Activated T-helper 2 cell treated with anti-CD3 and anti-CD28 coated beads, Interferon-gamma antibody, Interleukin-2, Interleukin-4, amounts not matched to agents 10 μg/mL and 5 μg/mL and 100 μg/mL, durations not matched to agents 14 hours and 24 hours and 36 hours (primary cell): ENCODE measurements at regions of chr12 and their contacts with region 1.

Region 1: DNA sequence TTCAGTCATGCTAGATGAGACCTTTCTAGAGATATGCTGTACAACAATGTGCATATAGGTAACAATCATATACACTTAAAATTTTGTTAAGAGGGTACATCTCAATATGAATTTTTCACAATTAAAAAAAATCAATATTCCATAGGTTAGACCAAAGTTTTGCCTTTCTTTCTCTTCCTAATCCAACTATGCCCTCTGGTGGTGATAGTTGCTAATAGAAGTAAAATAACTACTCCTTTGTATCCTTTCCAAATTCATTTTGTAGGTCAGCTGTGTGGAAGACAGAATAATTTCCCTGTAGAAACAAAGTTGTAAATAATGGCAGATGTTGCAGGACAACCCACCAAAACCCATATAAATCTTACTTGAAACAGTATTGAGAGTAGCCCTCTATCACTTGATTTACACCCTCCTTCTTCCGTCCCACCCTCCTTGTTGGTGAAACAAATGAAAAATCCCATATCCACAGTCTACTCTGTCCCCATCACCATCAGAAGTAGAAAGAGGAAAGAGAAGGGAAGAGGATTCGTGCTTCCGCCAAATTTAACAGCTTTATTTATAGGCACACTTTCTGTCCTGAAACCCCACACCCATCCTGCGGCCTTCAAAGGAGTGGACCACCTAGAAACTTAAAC is 34.2 kb upstream of the KICS2 start:
- DNase-seq: no peak
- H3K4me3 Mint-ChIP-seq: no peak overlapping the region
- H3K27ac Mint-ChIP-seq: no peak overlapping the region
- H3K4me1 Mint-ChIP-seq: peaks cover 8% of the 10 kb centered on the region
- H3K27me3 Mint-ChIP-seq: no peaks in the 10 kb centered on the region

Region 2: DNA sequence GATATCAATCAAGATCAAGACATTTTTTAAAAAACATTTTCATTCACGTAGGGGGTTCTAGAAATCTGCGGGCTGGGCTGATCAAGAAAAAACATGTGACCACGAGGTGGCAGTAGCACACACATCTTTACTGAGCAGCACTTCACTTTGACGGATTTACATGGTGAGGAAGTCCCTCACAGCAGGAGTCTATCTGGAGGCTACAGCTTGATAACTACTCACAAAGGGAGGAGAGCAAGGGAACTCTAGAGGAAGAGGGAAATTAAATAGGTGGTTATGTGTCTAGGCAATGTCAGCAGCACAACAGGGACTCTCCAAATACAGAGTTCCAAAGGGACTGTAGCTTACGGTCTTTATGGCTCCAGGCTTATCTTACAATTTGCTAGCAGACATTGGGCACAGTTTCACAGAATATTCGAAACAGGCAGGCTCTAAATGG is 836.1 kb before region 1 on chr12:
- intact Hi-C with region 1: loop called (anchors 5 kb)
- DNase-seq: peak; percentile 13
- H3K4me3 Mint-ChIP-seq: no peak overlapping the region
- H3K27ac Mint-ChIP-seq: no peak overlapping the region
- H3K4me1 Mint-ChIP-seq: no peaks in the 10 kb centered on the region
- H3K27me3 Mint-ChIP-seq: no peaks in the 10 kb centered on the region

Region 3: DNA sequence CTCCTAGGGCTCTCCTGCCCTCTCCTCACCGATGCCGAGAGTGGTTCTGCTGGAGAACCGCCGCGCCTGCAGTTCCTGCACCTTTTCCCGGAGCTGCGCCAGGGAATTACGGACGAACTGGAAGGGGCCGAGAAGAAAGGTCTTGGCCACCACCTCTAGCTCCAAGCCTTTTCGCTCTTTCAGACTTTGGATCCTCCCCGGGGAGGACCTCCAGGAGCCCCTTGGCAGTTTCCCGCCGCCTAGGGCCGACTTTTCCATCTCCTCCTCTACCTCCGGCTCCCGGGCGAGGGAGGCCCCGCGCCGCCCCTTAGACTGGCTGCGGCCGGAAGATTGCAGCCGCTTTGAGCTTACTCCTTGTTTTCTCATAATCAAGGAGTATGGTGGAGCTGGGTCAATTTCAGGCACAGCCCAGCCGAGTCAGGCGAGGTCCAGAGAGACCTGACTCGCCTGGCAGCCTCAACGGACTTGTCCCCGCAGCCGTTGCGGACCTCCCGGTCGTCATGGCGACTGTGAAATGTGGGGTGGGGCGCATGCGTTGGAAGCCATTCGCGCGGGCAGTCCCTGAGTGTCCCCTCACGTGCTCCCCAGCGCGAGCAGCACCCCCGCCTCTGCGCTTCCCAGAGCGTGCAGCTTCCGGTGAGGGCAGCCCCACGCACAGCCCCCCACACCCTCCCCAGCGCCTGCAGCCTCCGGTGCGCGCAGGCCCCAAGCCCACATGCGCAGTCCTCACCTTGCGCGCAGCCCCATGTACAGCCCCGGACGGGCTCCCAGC is 588.1 kb before region 1 on chr12 and contains the start of gene DPY19L2:
- intact Hi-C with region 1: loop called (anchors 5 kb)
- DNase-seq: peak; percentile 14
- H3K4me3 Mint-ChIP-seq: peak within 1 kb of the TSS; percentile 83
- H3K27ac Mint-ChIP-seq: no peak within 1 kb of the TSS
- H3K4me1 Mint-ChIP-seq: peaks cover 10% of the 10 kb centered on the region
- H3K27me3 Mint-ChIP-seq: peaks cover 40% of the 10 kb centered on the region
- total RNA-seq, gene DPY19L2: 0.32 and 0.91 TPM in 2 replicates

Region 4: GRCh38 chr12:63843721-63844390 is 412.4 kb before region 1 on chr12:
- intact Hi-C with region 1: loop called (anchors 1 kb)
- DNase-seq: peak; percentile 68
- H3K4me3 Mint-ChIP-seq: peak overlapping the region; percentile 66
- H3K27ac Mint-ChIP-seq: no peak overlapping the region
- H3K4me1 Mint-ChIP-seq: peaks cover 9% of the 10 kb centered on the region
- H3K27me3 Mint-ChIP-seq: peaks cover 47% of the 10 kb centered on the region

Region 5: GRCh38 chr12:63915105-63915800 is 341.0 kb before region 1 on chr12:
- intact Hi-C with region 1: no loop called
- DNase-seq: no peak
- H3K4me3 Mint-ChIP-seq: no peak overlapping the region
- H3K27ac Mint-ChIP-seq: no peak overlapping the region
- H3K4me1 Mint-ChIP-seq: no peaks in the 10 kb centered on the region
- H3K27me3 Mint-ChIP-seq: no peaks in the 10 kb centered on the region

Region 6: DNA sequence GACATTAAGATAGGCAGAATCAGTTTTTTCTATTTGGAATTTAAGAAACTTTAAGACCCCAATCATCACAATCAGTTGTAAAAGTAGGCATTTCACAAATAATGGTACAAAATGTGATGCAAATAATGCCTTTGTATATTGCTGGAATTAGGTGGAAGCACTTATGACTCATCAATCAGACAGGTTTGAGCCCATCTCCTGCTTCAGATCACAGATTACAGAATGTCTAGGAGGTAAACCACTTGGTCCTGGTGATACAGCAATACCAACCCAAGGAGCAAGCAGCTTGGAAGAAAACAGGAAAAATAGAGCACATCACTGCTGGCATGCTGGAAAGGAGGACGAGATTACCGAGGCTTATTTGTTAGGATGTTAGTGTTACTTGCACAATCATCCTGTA is 76.7 kb after region 1 on chr12:
- intact Hi-C with region 1: no loop called
- DNase-seq: no peak
- H3K4me3 Mint-ChIP-seq: no peak overlapping the region
- H3K27ac Mint-ChIP-seq: no peak overlapping the region
- H3K4me1 Mint-ChIP-seq: no peaks in the 10 kb centered on the region
- H3K27me3 Mint-ChIP-seq: peaks cover 1% of the 10 kb centered on the region